ENCODE measurements at regions of chr7 and their contacts with region 1.

Region 1: GRCh38 chr7:116180302-116180701 is 30.0 kb upstream of the TES start:
- DNase-seq: no peak
- H3K4me3 ChIP-seq: no peak overlapping the region
- H3K27ac ChIP-seq: no peak overlapping the region
- H3K27me3 ChIP-seq: no peaks in the 10 kb centered on the region
- CTCF ChIP-seq: peak; percentile 83

Region 2: DNA sequence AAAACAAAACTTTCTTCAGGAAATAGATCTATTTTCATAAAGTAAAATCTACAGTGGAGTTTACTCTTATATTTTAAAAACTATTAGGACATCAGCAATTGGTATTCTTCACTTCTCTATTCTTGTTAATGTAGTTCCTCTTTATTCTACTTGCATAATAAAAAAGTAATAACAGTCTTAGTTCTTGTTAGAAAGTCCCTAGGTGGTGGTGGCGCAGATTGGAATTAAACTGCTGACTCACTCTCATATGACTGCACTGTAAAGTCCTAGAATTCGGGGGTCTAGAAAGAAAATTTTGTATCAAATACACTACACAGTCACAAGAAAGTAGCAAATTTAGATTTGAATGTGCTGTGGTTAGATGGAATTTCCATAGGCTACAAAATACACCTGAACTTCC is 14.6 kb before region 1 on chr7:
- CTCF ChIA-PET with region 1: interaction called, 15 read pairs
- POLR2A ChIA-PET with region 1: no interaction called
- DNase-seq: no peak
- H3K4me3 ChIP-seq: no peak overlapping the region
- H3K27ac ChIP-seq: no peak overlapping the region
- H3K27me3 ChIP-seq: no peaks in the 10 kb centered on the region
- CTCF ChIP-seq: no peak

Region 3: GRCh38 chr7:116195451-116195850 is 15.1 kb after region 1 on chr7:
- CTCF ChIA-PET with region 1: interaction called, 45 read pairs
- POLR2A ChIA-PET with region 1: no interaction called
- DNase-seq: no peak
- H3K4me3 ChIP-seq: no peak overlapping the region
- H3K27ac ChIP-seq: no peak overlapping the region
- H3K27me3 ChIP-seq: no peaks in the 10 kb centered on the region
- CTCF ChIP-seq: no peak

Region 4: DNA sequence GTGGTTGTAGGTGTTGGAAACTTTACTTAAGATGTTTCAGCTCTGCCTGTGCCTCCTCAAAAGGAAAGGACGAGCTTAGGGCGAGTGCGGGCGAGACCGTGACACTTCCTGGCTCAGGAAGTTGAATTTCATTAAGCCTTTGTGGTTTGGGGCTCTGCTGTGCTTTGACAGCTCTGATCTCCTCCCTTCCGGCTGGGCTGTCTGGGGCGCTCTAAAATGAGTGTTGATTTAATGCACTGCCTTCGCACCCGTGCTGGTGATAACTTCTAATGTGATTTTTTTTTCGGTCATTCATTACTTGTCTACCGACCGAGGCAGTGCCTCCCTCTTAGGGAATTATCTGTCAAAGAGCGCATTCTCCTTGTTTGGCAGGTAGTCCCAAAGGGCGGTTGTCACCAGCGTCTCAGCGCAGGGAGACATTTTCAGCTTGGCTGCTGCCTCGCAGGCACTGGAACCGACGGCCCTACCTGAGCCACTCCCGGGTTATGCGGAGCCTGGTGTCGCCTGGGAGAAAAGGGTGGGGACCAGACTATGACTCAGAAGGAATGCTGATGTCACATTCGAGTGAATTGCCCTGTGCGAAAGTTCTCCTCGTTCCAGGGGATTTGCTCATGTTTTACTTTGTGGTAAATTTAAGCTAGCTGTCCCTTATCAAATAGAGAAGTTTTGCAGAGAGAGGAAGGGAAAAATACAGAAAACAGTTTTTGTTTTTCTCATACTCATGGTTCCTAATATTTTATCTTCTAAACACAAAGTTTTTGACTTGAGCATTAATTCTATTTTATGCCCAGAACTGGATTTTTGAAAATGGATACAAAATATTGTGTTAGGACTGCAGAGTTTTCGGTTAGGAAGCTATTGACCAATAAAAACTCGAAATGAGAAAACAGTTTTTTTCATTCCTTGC is 31.0 kb after region 1 on chr7:
- CTCF ChIA-PET with region 1: interaction called, 37 read pairs
- POLR2A ChIA-PET with region 1: interaction called, 5 read pairs
- DNase-seq: no peak
- H3K4me3 ChIP-seq: peak overlapping the region; percentile 80
- H3K27ac ChIP-seq: peak overlapping the region; percentile 75
- H3K27me3 ChIP-seq: no peaks in the 10 kb centered on the region
- CTCF ChIP-seq: no peak

Region 5: DNA sequence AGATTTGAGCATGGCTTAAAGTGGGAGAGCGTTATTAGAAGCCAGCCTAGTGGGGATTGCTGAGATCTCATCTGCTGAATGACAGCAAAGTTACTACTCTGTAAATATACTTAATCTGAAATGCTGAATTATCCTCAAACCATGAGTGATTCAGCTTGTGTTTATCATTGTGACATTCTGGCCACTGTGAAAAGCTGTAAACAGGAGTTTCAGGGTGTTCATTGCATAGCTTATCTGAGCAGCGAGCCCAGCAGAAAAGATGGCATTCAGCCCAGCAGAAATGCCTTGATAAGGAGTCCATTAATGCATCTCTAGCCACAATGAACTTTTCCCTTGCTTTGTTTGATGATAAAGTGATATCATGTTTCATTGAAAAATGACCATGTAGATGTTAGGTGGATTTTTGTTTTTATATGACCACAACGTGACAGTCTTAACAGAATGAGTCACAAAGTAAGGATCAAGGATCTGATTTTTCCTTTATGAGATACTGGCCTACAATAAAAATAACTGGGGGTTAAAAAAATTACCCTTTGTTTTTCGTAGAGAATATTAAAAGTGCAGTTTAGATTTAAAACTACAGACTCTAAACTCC is 37.8 kb after region 1 on chr7:
- CTCF ChIA-PET with region 1: interaction called, 15 read pairs
- POLR2A ChIA-PET with region 1: interaction called, 3 read pairs
- DNase-seq: peak; percentile 85
- H3K4me3 ChIP-seq: no peak overlapping the region
- H3K27ac ChIP-seq: no peak overlapping the region
- H3K27me3 ChIP-seq: no peaks in the 10 kb centered on the region
- CTCF ChIP-seq: 0 out of 2 replicates have a peak, but pooled peaks have one; percentile 6

Region 6: DNA sequence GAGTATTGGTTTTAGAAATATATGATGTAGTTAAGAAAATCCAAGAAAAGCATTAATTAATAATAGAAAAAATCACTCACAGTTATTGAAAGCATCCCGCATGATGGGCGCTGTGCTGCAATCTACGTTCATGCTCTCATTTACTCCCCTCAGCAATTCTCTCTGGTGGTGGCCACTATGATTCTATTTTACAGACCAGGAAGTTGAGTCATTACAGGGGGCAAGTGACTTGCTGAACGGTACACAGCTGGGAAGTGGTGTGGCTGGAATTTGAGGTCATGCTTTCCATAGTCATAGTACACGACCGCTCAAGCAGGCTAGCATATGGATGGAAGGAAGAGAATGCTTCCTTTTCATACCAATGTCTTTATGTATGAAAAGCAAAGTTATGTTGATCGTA is 147.4 kb after region 1 on chr7:
- CTCF ChIA-PET with region 1: no interaction called
- POLR2A ChIA-PET with region 1: no interaction called
- DNase-seq: peak; percentile 86
- H3K4me3 ChIP-seq: peak overlapping the region; percentile 27; the same call in 1 of the 2 replicates
- H3K27ac ChIP-seq: peak overlapping the region; percentile 66
- H3K27me3 ChIP-seq: no peaks in the 10 kb centered on the region
- CTCF ChIP-seq: no peak